Activated B cell treated with CpG ODN at 0.5 μM for 24 hours (primary cell): ENCODE measurements at regions of chr1 and their contacts with region 1.

Region 1: DNA sequence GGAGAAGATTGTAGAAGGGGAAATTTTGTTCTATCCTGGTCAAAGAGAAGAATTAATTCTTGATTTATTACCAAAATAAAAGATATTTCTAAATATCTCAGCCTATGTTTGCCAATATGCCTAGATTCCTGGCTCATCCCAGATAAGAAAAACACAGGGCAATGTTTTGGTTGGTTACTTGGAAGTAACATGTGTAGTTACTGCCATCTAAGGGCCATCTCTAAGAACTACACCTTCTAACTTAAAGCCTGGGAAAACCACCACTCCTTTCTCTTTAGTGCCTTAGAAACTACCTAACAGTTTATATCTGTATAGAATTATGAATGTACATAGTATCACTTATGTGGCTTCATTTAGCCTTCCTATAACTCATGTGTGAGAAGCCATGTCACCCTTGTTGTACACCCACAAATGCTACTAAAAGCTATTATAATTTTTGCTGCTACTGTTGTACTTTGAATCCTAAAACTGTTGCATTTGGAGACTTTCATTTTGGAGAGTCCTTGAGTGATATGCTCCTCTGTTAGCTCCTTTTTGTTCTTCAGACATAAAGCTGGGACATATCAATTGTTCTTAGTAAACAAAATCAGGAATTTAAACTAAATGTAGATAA is 4.5 kb downstream of the AIM2 start:
- DNase-seq: no peak
- ATAC-seq: no peak
- H3K4me3 Mint-ChIP-seq: peak overlapping the region; percentile 52
- H3K27ac Mint-ChIP-seq: peak overlapping the region; percentile 98
- H3K4me1 Mint-ChIP-seq: peaks cover 78% of the 10 kb centered on the region
- H3K27me3 Mint-ChIP-seq: no peaks in the 10 kb centered on the region
- CTCF ChIP-seq: peak; percentile 51

Region 2: GRCh38 chr1:157725221-157725577 is 1346.9 kb before region 1 on chr1:
- CTCF ChIA-PET with region 1: no interaction called
- POLR2A ChIA-PET with region 1: no interaction called
- intact Hi-C with region 1: loop called (anchors 10 kb)
- DNase-seq: no peak
- ATAC-seq: peak; percentile 17
- H3K4me3 Mint-ChIP-seq: peak overlapping the region; percentile 16
- H3K27ac Mint-ChIP-seq: peak overlapping the region; percentile 97
- H3K4me1 Mint-ChIP-seq: peaks cover 71% of the 10 kb centered on the region
- H3K27me3 Mint-ChIP-seq: no peaks in the 10 kb centered on the region
- CTCF ChIP-seq: no peak

Region 3: GRCh38 chr1:158177700-158178450 is 894.2 kb before region 1 on chr1:
- CTCF ChIA-PET with region 1: no interaction called
- POLR2A ChIA-PET with region 1: interaction called, 6 read pairs
- intact Hi-C with region 1: loop called (anchors 2 kb)
- DNase-seq: peak; percentile 70
- ATAC-seq: peak; percentile 77
- H3K4me3 Mint-ChIP-seq: peak overlapping the region; percentile 78
- H3K27ac Mint-ChIP-seq: peak overlapping the region; percentile 81
- H3K4me1 Mint-ChIP-seq: peaks cover 80% of the 10 kb centered on the region
- H3K27me3 Mint-ChIP-seq: no peaks in the 10 kb centered on the region
- CTCF ChIP-seq: no peak

Region 4: DNA sequence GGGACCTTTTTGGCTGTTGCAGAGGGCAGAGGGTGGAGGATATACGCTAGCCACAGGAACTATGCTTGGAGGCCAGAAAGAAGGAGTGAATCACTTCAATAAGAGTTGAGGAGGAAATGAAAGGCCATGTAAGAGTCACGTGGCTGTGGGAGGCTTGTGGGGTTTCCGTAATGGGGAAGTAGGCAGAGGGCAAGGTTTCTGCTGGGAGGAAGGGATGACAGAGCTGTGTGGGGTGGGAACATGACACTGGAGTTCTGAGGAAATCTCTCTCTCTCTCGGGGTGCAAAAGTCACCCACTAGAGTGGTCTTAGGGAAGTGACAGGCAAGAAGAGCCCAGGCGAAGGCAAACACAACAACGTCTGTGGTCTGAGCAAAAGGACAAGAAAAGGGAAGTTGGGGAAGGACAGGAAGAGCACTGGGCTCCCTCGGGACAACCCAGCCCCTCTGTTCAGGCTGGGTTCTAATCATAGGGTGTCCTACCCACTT is 786.3 kb before region 1 on chr1:
- CTCF ChIA-PET with region 1: interaction called, 3 read pairs
- POLR2A ChIA-PET with region 1: interaction called, 16 read pairs
- intact Hi-C with region 1: loop called (anchors 1 kb)
- DNase-seq: peak; percentile 68
- ATAC-seq: peak; percentile 73
- H3K4me3 Mint-ChIP-seq: peak overlapping the region; percentile 88
- H3K27ac Mint-ChIP-seq: peak overlapping the region; percentile 99
- H3K4me1 Mint-ChIP-seq: peaks cover 72% of the 10 kb centered on the region
- H3K27me3 Mint-ChIP-seq: no peaks in the 10 kb centered on the region
- CTCF ChIP-seq: no peak

Region 5: DNA sequence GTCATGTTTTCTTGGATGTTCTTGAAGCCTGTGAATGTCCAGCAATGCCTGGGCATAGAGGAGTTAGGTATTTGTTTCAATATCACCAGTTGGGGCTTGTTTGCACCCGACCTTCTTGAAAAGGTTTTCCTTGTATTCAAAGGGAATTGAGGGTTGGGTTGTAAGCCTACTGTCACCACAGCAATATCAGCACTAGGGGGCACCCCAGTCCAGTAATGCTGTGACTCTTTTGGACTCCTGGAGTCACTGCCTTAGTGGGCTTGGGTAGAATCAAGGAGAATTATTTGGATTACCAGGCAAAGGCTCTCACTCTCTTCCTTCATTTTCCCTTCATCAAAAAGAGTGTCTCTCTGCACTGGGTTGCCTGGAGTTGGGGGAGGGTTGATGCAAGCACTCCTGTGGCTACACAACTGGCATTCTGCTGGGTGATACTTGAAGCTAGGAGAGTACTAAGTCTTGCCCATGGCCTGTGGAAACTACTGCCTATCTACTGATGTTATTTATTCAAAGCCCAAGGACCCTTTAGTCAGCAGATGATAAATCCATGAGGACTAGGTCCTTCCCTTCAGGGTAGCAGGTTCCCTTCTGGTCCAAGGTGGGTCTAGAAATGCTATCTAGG is 565.6 kb before region 1 on chr1:
- CTCF ChIA-PET with region 1: interaction called, 15 read pairs
- POLR2A ChIA-PET with region 1: no interaction called
- intact Hi-C with region 1: loop called (anchors 1 kb)
- DNase-seq: no peak
- ATAC-seq: peak; percentile 56
- H3K4me3 Mint-ChIP-seq: no peak overlapping the region
- H3K27ac Mint-ChIP-seq: no peak overlapping the region
- H3K4me1 Mint-ChIP-seq: no peaks in the 10 kb centered on the region
- H3K27me3 Mint-ChIP-seq: peaks cover 18% of the 10 kb centered on the region
- CTCF ChIP-seq: no peak

Region 6: GRCh38 chr1:158998781-158999161 is 73.3 kb before region 1 on chr1:
- CTCF ChIA-PET with region 1: interaction called, 19 read pairs
- POLR2A ChIA-PET with region 1: interaction called, 3 read pairs
- intact Hi-C with region 1: no loop called
- DNase-seq: no peak
- ATAC-seq: peak; percentile 83
- H3K4me3 Mint-ChIP-seq: no peak overlapping the region
- H3K27ac Mint-ChIP-seq: no peak overlapping the region
- H3K4me1 Mint-ChIP-seq: peaks cover 20% of the 10 kb centered on the region
- H3K27me3 Mint-ChIP-seq: no peaks in the 10 kb centered on the region
- CTCF ChIP-seq: peak; percentile 59

Region 7: GRCh38 chr1:159030877-159031447 is 41.1 kb before region 1 on chr1:
- CTCF ChIA-PET with region 1: interaction called, 14 read pairs
- POLR2A ChIA-PET with region 1: interaction called, 4 read pairs
- intact Hi-C with region 1: no loop called
- DNase-seq: no peak
- ATAC-seq: no peak
- H3K4me3 Mint-ChIP-seq: no peak overlapping the region
- H3K27ac Mint-ChIP-seq: peak overlapping the region; percentile 35
- H3K4me1 Mint-ChIP-seq: peaks cover 65% of the 10 kb centered on the region
- H3K27me3 Mint-ChIP-seq: no peaks in the 10 kb centered on the region
- CTCF ChIP-seq: no peak